Psoas muscle (tissue), 8 donors: ENCODE measurements at regions of chr20 and their contacts with region 1.

Region 1: DNA sequence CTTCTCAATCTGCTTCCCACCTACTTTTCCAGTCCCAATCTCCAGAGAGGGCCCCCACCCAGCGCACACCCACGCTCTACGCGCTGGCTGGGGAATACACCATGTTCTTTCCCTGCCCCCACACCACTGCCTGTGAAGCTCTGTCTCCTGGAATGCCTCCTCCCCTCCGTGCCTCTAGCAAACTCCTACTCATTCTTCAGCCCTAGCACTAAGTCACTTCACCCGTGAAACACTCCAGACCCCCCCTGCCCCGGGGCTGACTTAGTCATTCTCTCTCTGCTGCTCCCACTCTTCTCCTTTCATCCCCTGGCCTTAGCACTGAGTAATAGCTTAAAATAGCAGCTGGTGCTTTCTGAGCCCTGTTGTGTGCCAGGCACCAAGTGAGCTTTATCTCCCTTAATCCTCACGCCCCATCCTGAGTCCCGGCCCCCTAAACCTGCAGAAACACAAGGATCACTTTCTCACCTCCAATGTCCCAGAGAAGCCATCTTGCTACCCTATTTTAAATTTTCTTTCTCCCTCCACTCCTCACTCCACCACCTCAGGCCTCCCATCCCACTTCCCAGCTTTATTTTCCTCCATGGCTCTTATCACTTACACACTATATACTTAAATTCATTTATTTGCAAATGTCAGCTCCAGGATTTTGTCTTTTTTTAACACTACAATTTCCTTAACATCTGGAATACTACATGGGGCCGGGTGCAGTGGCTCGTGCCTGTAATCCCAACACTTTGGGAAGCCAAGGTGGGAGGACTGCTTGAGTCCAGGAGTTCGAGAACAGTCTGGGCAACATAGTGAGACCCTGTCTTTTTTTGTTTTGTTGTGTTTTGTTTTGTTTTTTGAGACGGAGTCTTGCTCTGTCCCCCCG is 6.3 kb upstream of the PARD6B start:
- DNase-seq: peak; percentile 79 to 89
- ATAC-seq: peak; percentile 87 to 93 (median 90)
- H3K4me3 ChIP-seq: peak overlapping the region; percentile 40
- H3K27ac ChIP-seq: peak overlapping the region; percentile 79
- H3K4me1 ChIP-seq: peaks cover 14% of the 10 kb centered on the region
- H3K27me3 ChIP-seq: no peaks in the 10 kb centered on the region
- CTCF ChIP-seq: no peak

Region 2: DNA sequence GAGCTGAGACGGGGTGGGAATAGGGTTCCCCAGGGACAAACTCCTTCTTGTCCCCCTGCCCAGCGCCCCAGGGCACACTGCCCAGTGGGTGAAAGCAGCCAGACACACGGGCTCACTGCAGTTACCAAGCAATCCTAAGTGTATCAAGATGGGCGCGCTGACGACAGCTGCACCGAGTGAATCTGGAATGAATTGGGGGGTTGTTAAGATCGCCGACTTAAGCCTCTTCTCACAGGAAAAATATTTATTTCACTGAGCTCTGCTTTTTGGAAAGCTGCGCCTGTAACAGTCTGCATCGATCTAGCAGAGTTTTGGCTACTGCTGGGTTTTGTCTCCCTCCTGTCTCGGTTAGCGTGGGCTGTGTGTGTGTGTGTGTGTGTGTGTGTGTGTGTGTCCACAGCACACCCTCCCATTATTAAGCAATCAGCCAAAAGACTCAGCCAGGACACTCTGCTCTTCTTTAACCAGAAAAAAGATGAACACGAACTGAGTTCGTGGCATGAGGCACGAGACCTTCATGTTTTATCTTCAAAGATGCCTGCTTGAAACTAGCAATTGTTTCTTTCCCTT is 69.7 kb before region 1 on chr20:
- intact Hi-C with region 1: no loop called
- DNase-seq: peak; percentile 64 to 79
- ATAC-seq: peak; percentile 39 to 65 (median 60)
- H3K4me3 ChIP-seq: no peak overlapping the region
- H3K27ac ChIP-seq: peak overlapping the region; percentile 58
- H3K4me1 ChIP-seq: peaks cover 13% of the 10 kb centered on the region
- H3K27me3 ChIP-seq: no peaks in the 10 kb centered on the region
- CTCF ChIP-seq: no peak

Region 3: GRCh38 chr20:50680412-50680908 is 44.6 kb before region 1 on chr20:
- intact Hi-C with region 1: loop called in 1 of 2 experiments (anchors 5 kb)
- DNase-seq: peak; percentile 45 to 78
- ATAC-seq: peak; percentile 88 to 96 (median 94)
- H3K4me3 ChIP-seq: no peak overlapping the region
- H3K27ac ChIP-seq: no peak overlapping the region
- H3K4me1 ChIP-seq: no peaks in the 10 kb centered on the region
- H3K27me3 ChIP-seq: no peaks in the 10 kb centered on the region
- CTCF ChIP-seq: no peak